ENCODE measurements at regions of chr1 and their contacts with region 1.

Region 1: GRCh38 chr1:181033799-181034451 is at the start of gene MR1:
- DNase-seq: peak; percentile 92
- ATAC-seq: peak; percentile 90
- H3K4me3 ChIP-seq: peak within 1 kb of the TSS; percentile 93
- H3K27ac ChIP-seq: peak within 1 kb of the TSS; percentile 89
- H3K4me1 ChIP-seq: peaks cover 23% of the 10 kb centered on the region
- H3K27me3 ChIP-seq: no peaks in the 10 kb centered on the region
- CTCF ChIP-seq: no peak
- EP300 ChIP-seq: no peak
- POLR2A ChIP-seq: peak; percentile 84
- RAD21 ChIP-seq: no peak
- polyA plus RNA-seq, gene MR1: 24.7 to 28.5 TPM

Region 2: DNA sequence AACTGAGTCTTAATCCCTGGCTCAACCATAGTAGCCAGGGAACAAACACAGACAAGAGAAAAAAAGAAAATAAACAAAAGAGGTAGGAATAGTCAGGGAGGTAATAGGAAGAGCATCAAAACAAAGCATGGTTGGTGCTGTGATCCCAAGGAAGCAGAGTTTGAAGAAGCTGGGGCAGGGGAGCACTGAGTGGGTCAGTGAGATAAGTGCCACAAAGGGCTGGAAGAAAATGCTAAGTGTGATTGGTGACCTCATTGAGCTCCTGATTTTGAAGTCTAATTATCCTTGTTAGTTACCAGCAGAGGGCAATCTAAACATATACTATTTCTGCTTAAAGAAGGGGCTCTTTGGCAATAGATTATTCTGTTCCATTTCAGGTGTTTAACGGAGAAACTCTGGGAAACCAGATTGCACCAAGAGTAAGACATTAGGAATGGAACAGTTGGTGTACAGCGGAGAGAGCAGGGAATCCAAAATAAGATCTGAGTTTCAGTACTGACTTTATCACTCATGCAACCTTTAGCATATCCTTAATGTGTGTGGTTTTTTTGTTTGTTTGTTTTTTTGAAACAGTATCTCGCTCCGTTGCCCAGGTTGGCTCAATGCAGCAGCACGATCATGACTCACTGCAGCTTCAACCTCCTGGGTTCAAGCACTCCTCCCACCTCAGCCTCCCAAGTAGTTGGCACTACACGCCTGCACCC is 152.0 kb before region 1 on chr1:
- CTCF ChIA-PET with region 1: interaction called, 25 read pairs
- POLR2A ChIA-PET with region 1: interaction called, 3 read pairs
- RAD21 ChIA-PET with region 1: interaction called, 16 read pairs
- SMC1A ChIA-PET with region 1: interaction called, 40 read pairs
- in situ Hi-C with region 1: no loop called
- intact Hi-C with region 1: loop called (anchors 2 kb)
- DNase-seq: no peak
- ATAC-seq: peak; percentile 92
- H3K4me3 ChIP-seq: no peak overlapping the region
- H3K27ac ChIP-seq: no peak overlapping the region
- H3K4me1 ChIP-seq: no peaks in the 10 kb centered on the region
- H3K27me3 ChIP-seq: no peaks in the 10 kb centered on the region
- CTCF ChIP-seq: peak; percentile 38 to 66 (median 49); a peak in 5 of 6 replicates
- EP300 ChIP-seq: no peak
- POLR2A ChIP-seq: no peak
- RAD21 ChIP-seq: peak; percentile 80

Region 3: DNA sequence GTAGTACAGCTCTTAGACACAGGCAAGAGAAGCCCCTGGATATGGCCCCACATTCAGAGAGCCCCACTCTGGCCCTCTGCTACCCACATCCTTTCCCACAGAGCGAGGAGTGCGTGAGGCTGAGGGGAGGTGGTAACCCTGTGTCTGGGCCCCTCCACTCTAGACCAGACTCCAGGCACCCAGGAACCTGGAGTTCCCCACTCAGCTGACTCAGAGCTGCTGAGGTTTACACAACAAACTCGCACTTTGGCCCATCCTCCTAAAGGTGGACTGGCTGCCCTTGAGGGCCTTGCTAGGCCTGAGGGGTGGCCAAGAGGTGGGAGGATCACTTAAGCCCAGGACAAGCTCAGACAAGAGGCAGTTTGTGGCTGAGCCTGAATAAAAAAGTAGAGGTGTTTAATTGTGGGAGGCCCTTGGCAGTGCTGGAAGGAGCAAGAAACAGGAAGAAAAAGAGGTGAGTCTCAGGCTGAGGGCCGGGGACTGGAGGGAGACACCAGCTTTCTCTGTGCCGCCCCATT is 10.6 kb after region 1 on chr1:
- CTCF ChIA-PET with region 1: interaction called, 9 read pairs
- POLR2A ChIA-PET with region 1: interaction called, 13 read pairs
- RAD21 ChIA-PET with region 1: interaction called, 6 read pairs
- SMC1A ChIA-PET with region 1: interaction called, 10 read pairs
- in situ Hi-C with region 1: no loop called
- intact Hi-C with region 1: no loop called
- DNase-seq: peak; percentile 60
- ATAC-seq: peak; percentile 95
- H3K4me3 ChIP-seq: no peak overlapping the region; the same call in 1 of the 2 replicates
- H3K27ac ChIP-seq: peak overlapping the region; percentile 81
- H3K4me1 ChIP-seq: peaks cover 20% of the 10 kb centered on the region
- H3K27me3 ChIP-seq: no peaks in the 10 kb centered on the region
- CTCF ChIP-seq: no peak
- EP300 ChIP-seq: peak in 1 of 2 experiments; percentile 44; a peak in 1 of 4 replicates
- POLR2A ChIP-seq: peak; percentile 51; the same call in 1 of the 2 replicates
- RAD21 ChIP-seq: no peak

Region 4: GRCh38 chr1:181073638-181074037 is 39.7 kb after region 1 on chr1:
- CTCF ChIA-PET with region 1: no interaction called
- POLR2A ChIA-PET with region 1: interaction called, 5 read pairs
- RAD21 ChIA-PET with region 1: interaction called, 43 read pairs
- SMC1A ChIA-PET with region 1: interaction called, 85 read pairs
- in situ Hi-C with region 1: no loop called
- intact Hi-C with region 1: no loop called
- DNase-seq: no peak
- ATAC-seq: no peak
- H3K4me3 ChIP-seq: no peak overlapping the region
- H3K27ac ChIP-seq: no peak overlapping the region
- H3K4me1 ChIP-seq: peaks cover 19% of the 10 kb centered on the region
- H3K27me3 ChIP-seq: no peaks in the 10 kb centered on the region
- CTCF ChIP-seq: no peak
- EP300 ChIP-seq: no peak
- POLR2A ChIP-seq: no peak
- RAD21 ChIP-seq: no peak

Region 5: GRCh38 chr1:181099152-181100014 is 65.5 kb after region 1 on chr1:
- CTCF ChIA-PET with region 1: interaction called, 13 read pairs
- POLR2A ChIA-PET with region 1: interaction called, 4 read pairs
- RAD21 ChIA-PET with region 1: interaction called, 11 read pairs
- SMC1A ChIA-PET with region 1: interaction called, 21 read pairs
- in situ Hi-C with region 1: no loop called
- intact Hi-C with region 1: no loop called
- DNase-seq: peak; percentile 95
- ATAC-seq: peak; percentile 60
- H3K4me3 ChIP-seq: peak overlapping the region; percentile 18
- H3K27ac ChIP-seq: peak overlapping the region; percentile 89
- H3K4me1 ChIP-seq: peaks cover 86% of the 10 kb centered on the region
- H3K27me3 ChIP-seq: no peaks in the 10 kb centered on the region
- CTCF ChIP-seq: no peak
- EP300 ChIP-seq: peak; percentile 67 to 90; a peak in 3 of 4 replicates
- POLR2A ChIP-seq: no peak
- RAD21 ChIP-seq: no peak; the same call in 1 of the 2 replicates

Region 6: DNA sequence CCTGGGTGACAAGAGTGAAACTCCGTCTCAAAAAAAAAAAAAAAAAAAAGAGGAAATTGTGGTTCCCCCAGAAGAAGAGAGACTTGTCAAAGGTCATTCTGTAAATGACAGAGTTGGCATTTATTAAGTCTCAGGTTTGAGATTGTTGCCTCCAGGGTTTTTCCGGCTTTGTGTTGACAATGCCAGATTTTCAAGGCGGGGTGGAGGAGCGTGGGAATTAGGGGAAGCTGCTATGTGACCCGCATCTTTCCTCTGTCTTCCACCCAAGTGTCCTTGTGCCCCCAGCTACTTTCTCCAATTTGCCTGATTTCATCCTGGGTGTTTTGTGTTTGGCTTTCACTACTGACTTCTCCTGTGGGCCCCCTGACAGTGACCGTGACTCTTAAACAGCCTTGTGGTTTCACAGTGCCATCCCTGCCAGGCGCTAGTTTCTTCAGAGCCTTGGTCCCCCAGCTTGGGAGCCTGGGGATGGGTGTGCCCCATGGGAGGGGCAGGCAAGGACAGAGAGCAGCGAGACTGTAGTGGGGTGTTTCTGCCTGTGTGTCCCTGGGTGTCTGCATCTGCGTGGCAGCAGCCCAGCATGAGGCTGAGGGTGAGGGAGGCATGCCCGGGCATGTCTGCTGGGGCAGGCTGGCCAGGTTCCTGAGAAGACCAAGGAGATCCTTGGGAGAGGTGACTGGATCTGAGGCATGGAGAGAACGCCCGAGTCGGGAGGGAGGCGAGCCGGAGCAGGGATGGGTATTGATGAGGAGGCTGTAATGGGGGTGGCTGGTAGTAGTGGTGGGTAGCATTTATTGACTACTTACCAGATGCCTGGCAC is 100.8 kb after region 1 on chr1:
- CTCF ChIA-PET with region 1: interaction called, 321 read pairs
- POLR2A ChIA-PET with region 1: interaction called, 7 read pairs
- RAD21 ChIA-PET with region 1: interaction called, 189 read pairs
- SMC1A ChIA-PET with region 1: interaction called, 276 read pairs
- in situ Hi-C with region 1: no loop called
- intact Hi-C with region 1: no loop called
- DNase-seq: peak; percentile 91
- ATAC-seq: peak; percentile 57
- H3K4me3 ChIP-seq: peak overlapping the region; percentile 66
- H3K27ac ChIP-seq: peak overlapping the region; percentile 92
- H3K4me1 ChIP-seq: peaks cover 73% of the 10 kb centered on the region
- H3K27me3 ChIP-seq: no peaks in the 10 kb centered on the region
- CTCF ChIP-seq: no peak
- EP300 ChIP-seq: peak; percentile 4 to 40; a peak in 2 of 4 replicates
- POLR2A ChIP-seq: peak; percentile 81
- RAD21 ChIP-seq: no peak

Measured in GM12878 (cell line).